Dorsolateral prefrontal cortex (tissue), 120 donors: ENCODE measurements at regions of chr1 and their contacts with region 1.

Region 1: DNA sequence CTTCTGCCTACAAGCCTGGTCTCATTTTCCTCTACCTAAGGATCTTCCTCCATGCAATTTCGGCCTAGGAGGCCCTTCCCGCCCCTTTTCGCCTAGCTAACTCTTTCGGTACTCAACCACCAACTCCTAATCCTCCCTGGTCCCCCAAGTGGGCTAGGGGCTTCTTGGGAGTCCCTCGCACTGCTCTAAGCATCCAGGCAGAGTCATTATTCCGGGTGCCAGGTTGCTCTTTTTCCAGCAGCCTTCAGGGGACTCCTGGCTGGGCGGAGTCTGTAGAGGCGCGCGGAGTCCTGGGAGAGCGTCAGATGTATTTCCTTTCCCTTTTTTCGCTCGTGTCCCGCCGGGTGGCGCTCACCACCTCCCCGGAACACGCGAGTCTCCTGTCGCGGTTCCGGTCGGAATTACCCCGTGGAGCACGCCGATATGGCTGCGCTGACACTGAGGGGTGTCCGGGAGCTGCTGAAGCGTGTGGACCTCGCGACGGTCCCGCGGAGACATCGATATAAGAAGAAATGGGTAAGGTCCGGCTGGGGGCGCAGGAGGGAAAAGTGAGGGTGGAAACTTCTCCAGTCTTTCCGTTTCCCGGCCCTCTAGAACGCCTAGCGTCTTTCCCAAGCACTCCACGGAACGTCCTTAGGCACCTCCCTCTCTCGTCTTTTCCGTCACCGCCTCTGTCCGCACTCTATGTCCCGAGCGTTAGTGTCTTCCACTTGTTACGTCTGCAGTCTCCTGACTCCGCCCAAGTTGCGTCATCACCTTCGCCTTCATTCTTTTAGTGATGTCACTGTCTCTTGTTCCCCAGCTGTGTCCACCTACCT is at the start of gene NSUN4:
- DNase-seq: peak; percentile 79 to 94 (median 92)
- H3K4me3 ChIP-seq: peak within 1 kb of the TSS; percentile 46 to 97 (median 86)
- H3K27ac ChIP-seq: peak within 1 kb of the TSS; percentile 69 to 100 (median 98)
- H3K27me3 ChIP-seq: no peaks in the 10 kb centered on the region
- CTCF ChIP-seq: peak; percentile 42 to 89 (median 78)
- total RNA-seq, gene NSUN4: 18.8 to 38.8 (median 25.9) TPM

Region 2: GRCh38 chr1:46036894-46037839 is 303.4 kb before region 1 on chr1:
- intact Hi-C with region 1: loop called in 1 of 2 experiments (anchors 5 kb)
- DNase-seq: peak; percentile 79 to 93 (median 90)
- H3K4me3 ChIP-seq: no peak overlapping the region
- H3K27ac ChIP-seq: peak overlapping the region in 13 of 59 donors; percentile 2 to 62 (median 30)
- H3K27me3 ChIP-seq: no peaks in the 10 kb centered on the region
- CTCF ChIP-seq: peak; percentile 94 to 100 (median 99)

Region 3: DNA sequence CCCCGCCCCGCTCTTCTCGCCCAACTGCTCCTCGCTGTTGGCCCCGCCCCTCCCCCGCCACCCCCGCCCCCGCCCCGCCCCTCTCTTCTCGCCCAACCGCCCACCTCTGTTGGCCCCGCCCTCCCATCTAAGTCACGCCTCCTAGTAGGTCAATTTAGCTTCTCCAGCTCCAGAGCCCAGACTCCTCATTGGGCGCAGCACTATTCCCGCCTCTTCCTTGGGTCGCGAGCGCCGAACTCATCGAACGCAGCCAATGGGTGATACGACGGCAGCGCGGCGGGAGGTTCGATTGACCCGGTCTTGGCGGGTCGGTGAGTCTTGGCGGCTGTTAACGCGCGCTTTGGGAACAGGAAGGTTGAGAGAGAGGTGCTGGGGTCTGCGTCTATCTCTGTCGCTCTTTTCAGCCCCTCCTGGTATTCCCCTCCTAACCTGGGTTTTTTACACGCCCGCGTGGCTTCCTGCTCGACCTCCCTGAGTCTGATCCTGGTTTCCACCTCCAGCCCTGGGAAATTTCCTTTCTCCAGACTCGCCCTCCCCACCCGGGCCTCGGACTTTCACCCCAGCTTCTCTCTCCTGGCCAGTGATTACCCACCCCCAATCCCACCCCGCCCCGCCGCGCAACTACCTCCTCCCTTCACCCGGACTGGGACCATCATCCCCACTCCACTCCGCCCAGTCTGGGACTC is 93.0 kb before region 1 on chr1 and contains the start of gene RAD54L:
- intact Hi-C with region 1: loop called in 1 of 2 experiments (anchors 5 kb)
- DNase-seq: peak; percentile 91 to 98 (median 98)
- H3K4me3 ChIP-seq: peak within 1 kb of the TSS; percentile 57 to 98 (median 76)
- H3K27ac ChIP-seq: peak within 1 kb of the TSS in 17 of 59 donors; percentile 8 to 76 (median 41)
- H3K27me3 ChIP-seq: no peaks in the 10 kb centered on the region
- CTCF ChIP-seq: peak in 3 of 56 donors; percentile 10 to 18 (median 13)
- total RNA-seq, gene RAD54L: 0.89 to 10.5 (median 4.8) TPM

Region 4: DNA sequence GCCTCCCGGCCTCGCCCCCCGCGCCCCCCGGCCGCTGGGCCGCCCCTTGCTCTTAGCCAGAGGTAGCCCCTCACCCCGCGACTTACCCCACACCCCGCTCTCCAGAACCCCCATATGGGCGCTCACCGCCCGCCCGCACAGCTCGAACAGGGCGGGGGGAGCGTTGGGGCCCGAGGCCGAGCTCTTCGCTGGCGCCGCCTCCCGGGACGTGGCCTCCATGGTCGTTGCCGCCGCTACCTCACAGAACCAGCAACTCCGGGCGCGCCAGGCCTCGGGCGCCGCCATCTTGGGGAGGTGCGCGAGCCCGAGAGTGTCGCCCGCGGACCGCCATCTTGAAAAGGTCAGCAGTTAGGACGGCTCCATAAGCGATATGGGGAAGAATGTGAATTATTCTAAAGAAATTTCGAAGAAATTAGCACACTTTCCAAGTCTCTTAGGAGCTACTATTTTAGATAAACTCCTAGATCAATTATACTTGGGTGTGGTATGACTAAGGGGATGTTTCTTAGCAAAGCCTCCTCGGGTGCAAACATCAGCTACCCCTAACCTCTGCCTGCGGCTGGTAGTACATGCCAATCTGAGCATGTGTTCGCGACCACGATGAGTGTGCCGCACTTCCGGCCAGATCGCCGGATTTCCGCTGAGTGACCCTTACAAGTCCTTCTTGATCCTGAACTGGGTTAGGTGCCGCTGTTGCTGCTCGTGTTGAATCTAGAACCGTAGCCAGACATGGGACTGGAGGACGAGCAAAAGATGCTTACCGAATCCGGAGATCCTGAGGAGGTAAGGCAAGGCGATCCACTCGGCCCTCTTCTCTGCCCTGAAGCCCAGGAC is 37.4 kb before region 1 on chr1 and contains the starts of genes LRRC41 and UQCRH:
- intact Hi-C with region 1: loop called (anchors 1 to 2 kb)
- DNase-seq: peak; percentile 95 to 99 (median 97)
- H3K4me3 ChIP-seq: peak within 1 kb of the TSS; percentile 63 to 99 (median 93)
- H3K27ac ChIP-seq: peak within 1 kb of the TSS; percentile 58 to 99 (median 96)
- H3K27me3 ChIP-seq: no peaks in the 10 kb centered on the region
- CTCF ChIP-seq: peak in 21 of 56 donors; percentile 4 to 49 (median 14)
- total RNA-seq, gene LRRC41: 42.8 to 67.4 (median 56.1) TPM
- total RNA-seq, gene UQCRH: 114 to 365 (median 249) TPM

Region 5: DNA sequence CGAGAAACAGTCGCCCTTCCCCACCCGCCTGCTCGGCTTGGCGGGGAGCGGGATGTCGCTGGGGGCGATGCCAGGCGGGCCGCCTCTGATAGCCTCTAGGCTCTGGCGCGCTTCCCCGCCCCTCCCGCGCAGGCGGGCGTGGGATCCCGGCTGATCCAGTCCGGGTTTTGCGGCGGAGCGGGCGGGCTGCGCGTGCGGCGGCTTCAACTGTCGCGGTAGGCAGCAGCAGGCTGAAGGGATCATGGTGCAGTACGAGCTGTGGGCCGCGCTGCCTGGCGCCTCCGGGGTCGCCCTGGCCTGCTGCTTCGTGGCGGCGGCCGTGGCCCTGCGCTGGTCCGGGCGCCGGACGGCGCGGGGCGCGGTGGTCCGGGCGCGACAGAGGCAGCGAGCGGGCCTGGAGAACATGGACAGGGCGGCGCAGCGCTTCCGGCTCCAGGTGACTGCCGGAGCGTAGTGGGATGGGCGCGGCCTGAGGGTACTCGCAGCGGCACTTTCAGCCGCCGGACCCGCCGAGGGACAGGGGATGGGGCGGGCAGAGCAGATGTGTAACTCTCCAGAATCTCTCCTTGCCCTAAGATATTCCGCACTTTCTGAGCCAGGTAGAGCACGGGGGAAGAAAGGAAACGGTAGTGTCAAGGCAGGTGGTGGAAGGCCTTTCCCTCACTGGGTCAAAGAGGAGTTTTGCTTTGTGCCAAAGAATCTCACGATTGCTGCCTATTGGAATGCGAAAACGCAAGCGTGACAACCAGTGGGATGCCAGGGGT is 53.7 kb after region 1 on chr1 and contains the start of gene FAAH:
- intact Hi-C with region 1: loop called in 1 of 2 experiments (anchors 2 kb)
- DNase-seq: peak; percentile 79 to 93 (median 84)
- H3K4me3 ChIP-seq: peak within 1 kb of the TSS; percentile 51 to 88 (median 77)
- H3K27ac ChIP-seq: peak within 1 kb of the TSS in 58 of 59 donors; percentile 18 to 88 (median 80)
- H3K27me3 ChIP-seq: no peaks in the 10 kb centered on the region
- CTCF ChIP-seq: peak in 19 of 56 donors; percentile 7 to 46 (median 24)
- total RNA-seq, gene FAAH: 42.0 to 138 (median 65.0) TPM

Region 6: DNA sequence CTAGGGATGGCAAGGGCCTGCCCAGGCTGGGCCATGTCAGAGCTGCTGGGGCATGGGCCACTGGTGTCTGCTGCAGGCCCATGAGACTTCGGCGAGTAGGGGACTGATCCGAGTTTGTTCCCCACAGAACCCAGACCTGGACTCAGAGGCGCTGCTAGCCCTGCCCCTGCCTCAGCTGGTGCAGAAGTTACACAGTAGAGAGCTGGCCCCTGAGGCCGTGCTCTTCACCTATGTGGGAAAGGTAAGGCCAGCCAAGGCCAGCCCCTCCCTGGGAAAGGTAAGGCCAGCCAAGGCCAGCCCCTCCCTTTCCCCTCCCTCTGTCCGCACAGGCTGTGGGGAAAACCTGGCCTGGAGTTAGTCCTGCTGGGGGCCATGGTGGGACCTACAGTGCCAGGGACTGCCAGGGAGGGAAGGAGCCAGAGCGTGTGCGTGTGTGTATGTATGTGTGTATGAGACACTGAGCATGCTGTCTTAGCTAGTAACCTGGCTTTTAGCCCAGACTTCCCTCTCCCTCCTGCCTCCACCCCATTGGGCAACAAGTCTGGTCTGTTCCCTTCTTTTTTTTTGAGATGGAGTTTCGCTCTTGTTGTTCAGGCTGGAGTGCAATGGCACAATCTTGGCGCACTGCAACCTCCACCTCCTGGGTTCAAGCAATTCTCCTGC is 61.5 kb after region 1 on chr1:
- intact Hi-C with region 1: loop called in 1 of 2 experiments (anchors 5 kb)
- DNase-seq: peak; percentile 68 to 94 (median 88)
- H3K4me3 ChIP-seq: peak overlapping the region in 54 of 59 donors; percentile 1 to 54 (median 32)
- H3K27ac ChIP-seq: peak overlapping the region; percentile 34 to 97 (median 90)
- H3K27me3 ChIP-seq: no peaks in the 10 kb centered on the region
- CTCF ChIP-seq: peak in 16 of 56 donors; percentile 6 to 42 (median 19)